ENCODE measurements at regions of chr16 and their contacts with region 1.

Region 1: GRCh38 chr16:3530371-3530914 is 29.6 kb downstream of the CLUAP1 start:
- DNase-seq: no peak
- H3K4me3 ChIP-seq: no peak overlapping the region
- H3K27ac ChIP-seq: no peak overlapping the region
- H3K4me1 ChIP-seq: peaks cover 0 to 10% (median 5%) of the 10 kb centered on the region in 4 donors
- H3K27me3 ChIP-seq: no peaks in the 10 kb centered on the region
- CTCF ChIP-seq: no peak

Region 2: GRCh38 chr16:3611146-3611975 is 80.9 kb after region 1 on chr16 and contains the start of gene SLX4:
- intact Hi-C with region 1: loop called (anchors 5 kb)
- DNase-seq: peak; percentile 85 to 94
- H3K4me3 ChIP-seq: peak within 1 kb of the TSS; percentile 93
- H3K27ac ChIP-seq: peak within 1 kb of the TSS; percentile 81 to 90
- H3K4me1 ChIP-seq: peaks cover 0 to 27% (median 17%) of the 10 kb centered on the region in 4 donors
- H3K27me3 ChIP-seq: no peaks in the 10 kb centered on the region
- CTCF ChIP-seq: peak in 1 of 2 experiments; percentile 24

Measured in tibial artery (tissue), 4 donors.